ENCODE measurements at regions of chr16 and their contacts with region 1.

Region 1: GRCh38 chr16:27867122-27868110 is 196.1 kb downstream of the GSG1L start:
- DNase-seq: peak; percentile 86
- ATAC-seq: peak; percentile 96
- H3K4me3 ChIP-seq: no peak overlapping the region
- H3K27ac ChIP-seq: peak overlapping the region; percentile 34
- H3K4me1 ChIP-seq: peaks cover 2 to 6% of the 10 kb centered on the region in 2 experiments; a peak in 3 of 4 replicates
- H3K27me3 ChIP-seq: 0 out of 2 replicates have a peak, but pooled peaks cover 2% of the 10 kb centered on the region
- CTCF ChIP-seq: peak; percentile 73 to 79 (median 77)
- POLR2A ChIP-seq: no peak
- RAD21 ChIP-seq: peak; percentile 86

Region 2: DNA sequence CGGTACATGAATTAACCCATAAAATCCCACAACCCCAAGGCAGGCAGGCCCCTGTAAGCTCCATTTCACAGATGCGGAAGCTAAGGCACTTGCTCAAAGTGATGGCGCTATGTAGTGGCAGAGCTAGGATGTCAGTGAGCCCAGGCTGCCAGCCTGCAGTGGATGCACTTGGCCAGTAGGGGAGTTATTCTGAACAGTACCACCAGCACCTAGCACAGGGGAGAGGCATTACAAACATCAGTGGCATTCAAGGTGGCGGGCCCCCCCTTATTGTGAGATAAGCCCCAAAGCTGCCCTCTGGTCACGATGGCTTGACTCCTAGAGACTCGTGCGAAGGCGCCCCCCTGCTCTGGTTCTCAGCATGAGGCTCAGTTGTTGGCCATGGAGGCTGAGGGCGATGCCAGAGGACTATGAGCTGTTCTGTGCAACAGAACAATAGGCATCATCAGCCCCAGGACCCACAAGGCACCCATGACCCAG is 351.5 kb before region 1 on chr16:
- CTCF ChIA-PET with region 1: no interaction called
- POLR2A ChIA-PET with region 1: no interaction called
- RAD21 ChIA-PET with region 1: no interaction called
- intact Hi-C with region 1: loop called (anchors 5 kb)
- DNase-seq: peak; percentile 6
- ATAC-seq: peak; percentile 97
- H3K4me3 ChIP-seq: no peak overlapping the region
- H3K27ac ChIP-seq: no peak overlapping the region
- H3K4me1 ChIP-seq: no peaks in the 10 kb centered on the region
- H3K27me3 ChIP-seq: no peaks in the 10 kb centered on the region
- CTCF ChIP-seq: peak; percentile 4 to 86 (median 78); a peak in 4 of 6 replicates
- POLR2A ChIP-seq: no peak
- RAD21 ChIP-seq: peak; percentile 17; the same call in 1 of the 2 replicates

Region 3: GRCh38 chr16:27600381-27600780 is 267.0 kb before region 1 on chr16:
- CTCF ChIA-PET with region 1: no interaction called
- POLR2A ChIA-PET with region 1: no interaction called
- RAD21 ChIA-PET with region 1: interaction called in 1 of 2 experiments, 4 read pairs
- intact Hi-C with region 1: loop called (anchors 1 kb)
- DNase-seq: no peak
- ATAC-seq: no peak
- H3K4me3 ChIP-seq: no peak overlapping the region
- H3K27ac ChIP-seq: no peak overlapping the region
- H3K4me1 ChIP-seq: no peaks in the 10 kb centered on the region
- H3K27me3 ChIP-seq: no peaks in the 10 kb centered on the region
- CTCF ChIP-seq: no peak
- POLR2A ChIP-seq: no peak
- RAD21 ChIP-seq: no peak

Region 4: DNA sequence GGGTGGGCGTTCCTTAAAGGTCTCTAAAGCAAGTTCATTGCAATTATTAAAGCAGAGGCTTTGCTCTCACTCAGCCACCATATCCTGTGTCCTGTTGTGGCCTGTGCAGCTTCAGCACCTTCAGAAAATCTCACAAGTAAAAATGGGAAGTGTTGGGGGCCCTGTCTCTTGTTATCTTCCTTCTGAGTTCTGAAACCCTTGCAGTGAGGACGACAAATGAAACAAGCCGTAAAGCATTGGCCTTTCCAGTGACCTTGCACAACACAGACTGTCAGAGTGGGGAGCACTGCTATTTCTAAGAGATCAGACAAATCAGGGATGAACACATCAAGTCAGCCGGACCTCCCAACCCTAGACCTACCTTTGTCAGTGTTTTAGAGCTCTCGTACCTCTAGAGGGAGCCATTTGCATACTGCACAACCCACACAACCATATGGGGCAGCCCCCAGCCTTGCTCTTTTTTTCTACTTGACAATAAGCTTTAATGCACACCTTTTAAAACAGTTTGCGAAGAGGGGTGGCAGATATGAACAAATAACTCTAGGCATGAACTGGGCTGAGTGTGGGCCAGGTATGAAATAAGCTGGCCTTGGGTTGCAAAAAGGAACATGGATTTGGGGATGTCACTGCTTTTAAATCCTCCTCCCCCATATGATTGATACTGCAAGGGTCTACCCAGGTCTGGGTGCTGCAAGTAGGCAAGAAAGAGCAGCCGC is 227.7 kb before region 1 on chr16:
- CTCF ChIA-PET with region 1: interaction called, 36 read pairs
- POLR2A ChIA-PET with region 1: no interaction called
- RAD21 ChIA-PET with region 1: interaction called, 5 to 9 read pairs
- intact Hi-C with region 1: loop called (anchors 2 kb)
- DNase-seq: peak; percentile 21
- ATAC-seq: peak; percentile 90
- H3K4me3 ChIP-seq: no peak overlapping the region
- H3K27ac ChIP-seq: no peak overlapping the region
- H3K4me1 ChIP-seq: peaks cover 0 to 6% of the 10 kb centered on the region in 2 experiments; a peak in 1 of 4 replicates
- H3K27me3 ChIP-seq: no peaks in the 10 kb centered on the region
- CTCF ChIP-seq: peak; percentile 47 to 84 (median 75); a peak in 5 of 6 replicates
- POLR2A ChIP-seq: no peak
- RAD21 ChIP-seq: peak; percentile 67

Region 5: DNA sequence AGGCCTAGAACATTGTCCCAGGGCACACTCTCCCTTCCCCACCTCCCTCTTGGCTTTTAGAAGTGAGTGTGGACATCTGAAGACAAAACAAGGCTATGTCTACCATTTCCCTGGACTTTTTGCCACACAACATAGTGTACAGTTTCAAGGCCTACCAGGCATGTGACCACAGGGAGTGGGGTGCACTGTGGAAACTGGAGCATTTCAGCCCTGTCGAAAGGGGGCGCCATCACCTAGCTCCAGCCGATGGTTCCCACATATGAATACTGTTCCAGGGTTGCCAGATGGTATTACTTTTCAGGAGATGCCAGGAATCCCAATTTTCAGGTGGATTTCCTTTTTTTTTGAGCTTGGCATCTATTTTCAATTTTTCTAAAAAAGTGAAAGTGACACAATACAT is 176.8 kb before region 1 on chr16:
- CTCF ChIA-PET with region 1: interaction called, 13 read pairs
- POLR2A ChIA-PET with region 1: no interaction called
- RAD21 ChIA-PET with region 1: interaction called, 11 read pairs
- intact Hi-C with region 1: loop called (anchors 2 kb)
- DNase-seq: peak; percentile 21
- ATAC-seq: peak; percentile 94
- H3K4me3 ChIP-seq: no peak overlapping the region
- H3K27ac ChIP-seq: no peak overlapping the region
- H3K4me1 ChIP-seq: no peaks in the 10 kb centered on the region
- H3K27me3 ChIP-seq: no peaks in the 10 kb centered on the region
- CTCF ChIP-seq: peak; percentile 59 to 85 (median 83); a peak in 5 of 6 replicates
- POLR2A ChIP-seq: no peak
- RAD21 ChIP-seq: peak; percentile 70

Region 6: GRCh38 chr16:27945233-27945973 is 78.0 kb after region 1 on chr16:
- CTCF ChIA-PET with region 1: no interaction called
- POLR2A ChIA-PET with region 1: no interaction called
- RAD21 ChIA-PET with region 1: no interaction called
- intact Hi-C with region 1: no loop called
- DNase-seq: no peak
- ATAC-seq: no peak
- H3K4me3 ChIP-seq: no peak overlapping the region
- H3K27ac ChIP-seq: no peak overlapping the region
- H3K4me1 ChIP-seq: no peaks in the 10 kb centered on the region
- H3K27me3 ChIP-seq: peaks cover 9% of the 10 kb centered on the region; the same call in 1 of the 2 replicates
- CTCF ChIP-seq: no peak
- POLR2A ChIP-seq: no peak
- RAD21 ChIP-seq: no peak